ENCODE measurements at regions of chr3 and their contacts with region 1.

Region 1: GRCh38 chr3:173217127-173217526 is 76.1 kb upstream of the SPATA16 start:
- DNase-seq: no peak
- ATAC-seq: peak in 1 of 8 donors; percentile 51
- H3K4me3 ChIP-seq: no peak overlapping the region
- H3K27ac ChIP-seq: no peak overlapping the region
- H3K4me1 ChIP-seq: no peaks in the 10 kb centered on the region
- H3K27me3 ChIP-seq: no peaks in the 10 kb centered on the region
- CTCF ChIP-seq: no peak

Region 2: DNA sequence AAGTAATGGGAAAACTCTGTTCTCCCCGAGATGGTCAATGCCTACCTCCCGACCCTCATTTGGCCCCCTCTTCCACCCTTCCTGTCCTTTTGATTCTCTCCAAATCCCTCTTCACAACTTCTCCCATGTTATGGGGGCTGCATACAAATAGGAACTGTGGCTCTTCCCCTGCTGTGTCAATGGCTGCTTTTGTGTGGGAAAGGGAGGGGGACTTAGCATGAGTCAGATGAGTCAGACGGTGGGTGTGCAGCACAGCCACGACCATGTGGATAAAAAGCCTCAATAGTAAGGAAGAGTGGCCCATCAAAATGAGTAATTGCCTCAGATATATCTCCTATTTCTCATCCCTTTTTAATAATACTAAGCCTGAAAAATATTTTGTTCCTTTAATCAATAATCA is 108.0 kb before region 1 on chr3:
- intact Hi-C with region 1: loop called in 1 of 10 experiments (anchors 10 kb)
- DNase-seq: no peak
- ATAC-seq: no peak
- H3K4me3 ChIP-seq: no peak overlapping the region
- H3K27ac ChIP-seq: no peak overlapping the region
- H3K4me1 ChIP-seq: no peaks in the 10 kb centered on the region
- H3K27me3 ChIP-seq: no peaks in the 10 kb centered on the region
- CTCF ChIP-seq: no peak

Measured in heart right ventricle (tissue), 16 donors.